BJ (cell line): ENCODE measurements at regions of chr5 and their contacts with region 1.

Region 1: DNA sequence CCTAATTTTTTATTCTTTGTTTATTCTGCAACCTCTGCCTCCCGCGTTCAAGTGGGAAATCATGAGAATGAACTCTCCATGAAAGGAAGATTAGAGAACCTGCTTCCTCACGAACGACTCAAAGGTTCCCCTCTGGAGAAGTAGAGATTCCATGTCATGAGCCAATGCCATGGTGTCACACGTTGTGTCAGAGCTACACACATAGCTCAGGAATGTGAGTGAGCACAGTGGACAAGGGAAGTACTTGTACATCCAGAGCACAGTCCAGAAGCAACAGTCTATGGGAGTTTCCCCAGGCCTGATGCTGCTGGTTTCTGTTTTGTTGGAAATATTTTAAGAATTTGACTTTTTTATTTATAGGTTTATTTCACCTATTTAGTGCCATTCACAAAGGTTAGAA is 26.8 kb upstream of the PPP2CA start:
- DNase-seq: peak; percentile 59
- H3K4me3 ChIP-seq: no peak overlapping the region
- H3K27me3 ChIP-seq: no peaks in the 10 kb centered on the region
- CTCF ChIP-seq: no peak

Region 2: GRCh38 chr5:134161513-134162395 is 90.9 kb before region 1 on chr5:
- CTCF ChIA-PET with region 1: no interaction called
- POLR2A ChIA-PET with region 1: no interaction called
- DNase-seq: no peak
- H3K4me3 ChIP-seq: no peak overlapping the region
- H3K27me3 ChIP-seq: no peaks in the 10 kb centered on the region
- CTCF ChIP-seq: no peak

Region 3: DNA sequence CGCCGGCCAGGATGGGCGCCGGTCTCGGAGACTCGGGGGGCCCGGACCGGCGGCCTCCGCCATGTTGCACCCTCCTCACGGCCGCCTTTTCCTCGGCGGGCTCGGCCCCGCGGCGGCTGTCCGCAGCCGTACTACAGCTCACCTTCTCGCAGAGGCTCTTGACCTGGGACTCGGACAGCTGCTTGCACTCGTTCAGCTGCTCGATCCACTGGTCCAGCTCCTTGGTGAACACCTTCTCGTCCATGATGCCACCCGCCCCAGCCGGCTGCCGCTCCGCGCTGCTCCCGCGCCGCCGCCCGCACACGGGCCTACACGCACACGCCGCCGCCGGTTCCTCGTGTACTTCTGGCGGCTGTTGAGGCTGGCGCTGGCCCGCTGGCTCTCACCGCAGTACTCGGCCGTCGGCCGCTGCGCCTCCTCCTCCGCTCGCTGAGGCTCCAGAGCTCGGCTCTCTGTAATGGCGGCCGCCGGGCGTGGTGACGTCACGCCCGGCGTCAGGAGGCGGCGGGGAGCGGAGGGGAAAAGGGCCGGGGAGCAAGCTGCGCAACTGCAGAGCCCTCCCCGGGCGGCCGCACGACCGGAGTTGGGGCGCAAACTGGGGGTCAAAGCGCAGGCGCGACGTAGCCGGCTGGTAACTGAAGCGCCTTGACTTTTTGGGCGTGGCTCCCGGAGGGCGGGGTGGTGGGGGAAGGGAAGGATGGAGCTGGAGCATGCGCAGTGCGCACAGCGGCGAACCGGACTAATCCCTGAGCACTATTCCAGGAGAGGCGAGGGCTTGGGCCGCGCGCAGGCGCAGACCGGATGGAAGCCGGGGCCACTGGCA is 26.8 kb before region 1 on chr5 and contains the start of gene PPP2CA:
- CTCF ChIA-PET with region 1: interaction called, 4 read pairs
- POLR2A ChIA-PET with region 1: interaction called, 10 read pairs
- DNase-seq: peak; percentile 98
- H3K4me3 ChIP-seq: peak within 1 kb of the TSS; percentile 99
- H3K27me3 ChIP-seq: no peaks in the 10 kb centered on the region
- CTCF ChIP-seq: no peak
- polyA plus RNA-seq, gene PPP2CA: 77.1 and 121 TPM in 2 replicates

Region 4: DNA sequence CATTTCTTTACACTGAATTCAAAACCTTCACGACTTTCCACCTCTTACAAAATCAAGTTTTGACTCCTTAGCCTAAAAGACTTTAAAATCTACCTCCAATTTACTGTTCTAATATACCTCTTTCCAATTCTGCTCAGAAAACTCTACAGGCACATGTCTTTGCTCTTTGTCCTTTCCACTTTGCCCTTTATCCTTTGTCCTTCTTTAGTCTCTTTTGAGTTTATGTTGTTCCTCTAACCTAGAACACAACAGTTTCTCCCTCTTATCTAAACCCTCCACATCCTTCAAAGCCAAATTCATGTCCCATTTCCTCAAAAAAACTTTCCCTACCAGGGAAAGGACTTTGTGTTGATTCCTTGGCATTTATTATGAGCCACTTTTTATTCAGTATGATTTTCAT is 112.9 kb after region 1 on chr5:
- CTCF ChIA-PET with region 1: no interaction called
- POLR2A ChIA-PET with region 1: interaction called, 12 read pairs
- DNase-seq: no peak
- H3K4me3 ChIP-seq: no peak overlapping the region
- H3K27me3 ChIP-seq: no peaks in the 10 kb centered on the region
- CTCF ChIP-seq: no peak

Region 5: DNA sequence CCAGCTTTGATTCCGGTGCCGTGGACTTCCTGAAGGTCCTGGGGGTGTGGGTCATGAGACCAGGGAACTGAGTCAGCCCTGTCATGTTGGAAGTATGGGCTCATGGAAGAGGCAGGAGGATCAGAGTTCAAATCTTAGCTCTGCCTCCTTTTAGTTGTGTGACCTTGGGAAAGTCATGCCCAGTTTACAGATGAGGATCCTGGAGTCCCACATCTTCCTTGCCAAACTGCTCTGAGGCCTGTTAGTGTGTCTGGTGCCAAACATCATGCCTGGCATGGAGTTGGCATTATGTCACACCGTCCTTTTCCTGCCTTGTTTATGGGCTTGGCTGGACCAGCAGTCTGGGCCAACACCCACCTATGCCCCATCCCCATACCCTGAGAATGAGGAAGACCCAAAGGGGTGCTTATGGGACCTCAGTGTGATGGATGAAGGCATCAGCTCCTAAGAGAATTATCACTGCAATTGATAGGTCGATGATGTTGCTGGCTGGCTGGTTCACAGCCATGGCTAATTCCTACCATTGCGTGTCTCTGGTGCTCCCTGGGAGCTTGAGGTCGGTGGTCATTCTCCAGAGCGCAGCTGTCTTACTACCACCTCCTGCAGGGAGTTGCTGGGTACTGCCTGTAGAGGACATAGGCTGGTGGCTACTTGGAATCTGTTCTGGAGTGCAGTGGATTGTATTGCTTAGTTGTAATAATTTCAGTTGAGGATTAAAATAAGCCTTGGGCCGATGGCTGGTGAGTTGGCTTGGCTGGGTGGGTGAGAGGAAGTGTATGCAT is 921.8 kb after region 1 on chr5:
- CTCF ChIA-PET with region 1: no interaction called
- POLR2A ChIA-PET with region 1: no interaction called
- DNase-seq: no peak
- H3K4me3 ChIP-seq: no peak overlapping the region
- H3K27me3 ChIP-seq: peaks cover 8% of the 10 kb centered on the region
- CTCF ChIP-seq: peak; percentile 19